CD14-positive monocyte (primary cell): ENCODE measurements at regions of chr15 and their contacts with region 1.

Region 1: DNA sequence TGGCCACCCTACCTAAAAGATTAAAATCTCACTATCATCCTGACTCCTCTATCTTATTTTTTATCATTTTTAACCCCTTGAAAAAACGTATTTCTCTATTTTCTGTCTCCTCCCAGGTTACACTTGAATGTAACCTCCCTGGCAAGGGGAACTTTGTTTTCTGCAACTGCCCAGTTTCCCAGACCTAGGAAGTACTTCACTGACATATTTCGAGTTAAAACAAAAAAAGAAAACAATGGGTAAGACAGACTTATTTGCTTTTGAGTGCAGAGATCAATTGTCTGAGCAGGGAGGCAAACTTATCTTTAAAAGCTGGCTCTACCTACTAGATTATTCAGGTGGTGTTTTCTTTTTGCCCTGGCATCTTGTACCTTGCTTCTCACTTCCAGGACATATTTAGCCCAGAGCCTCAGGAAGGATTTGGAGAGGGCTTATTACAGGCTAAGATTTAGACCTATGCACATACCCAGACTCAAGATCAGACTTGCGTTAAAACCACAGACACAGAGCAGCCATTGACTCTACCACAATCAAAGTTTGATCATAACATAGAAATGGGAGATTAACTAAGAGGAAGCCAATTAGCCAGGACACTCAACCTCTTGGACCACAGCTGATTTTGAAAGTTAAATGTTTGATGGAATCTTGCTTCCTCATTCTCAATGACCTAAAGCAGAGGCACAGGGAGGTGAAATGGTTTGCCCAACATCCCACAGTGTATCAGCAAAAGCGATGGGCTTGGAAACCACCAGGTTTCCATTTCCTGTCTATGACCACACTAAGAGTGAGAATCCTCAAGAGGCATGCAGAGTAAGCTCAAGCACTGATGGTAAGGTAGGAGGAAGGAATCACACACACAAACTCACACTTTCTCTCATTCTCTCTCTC is 169.5 kb upstream of the THBS1 start:
- DNase-seq: peak; percentile 85 to 96 (median 92)
- H3K4me3 ChIP-seq: no peak overlapping the region
- H3K4me3 Mint-ChIP-seq: peak overlapping the region in 1 of 2 donors; percentile 19
- H3K27ac ChIP-seq: peak overlapping the region in 1 of 2 donors; percentile 91
- H3K27ac Mint-ChIP-seq: peak overlapping the region; percentile 73 to 98 (median 93)
- H3K4me1 ChIP-seq: peaks cover 54 to 55% of the 10 kb centered on the region in 2 donors
- H3K4me1 Mint-ChIP-seq: peaks cover 70% of the 10 kb centered on the region
- H3K27me3 ChIP-seq: no peaks in the 10 kb centered on the region
- H3K27me3 Mint-ChIP-seq: peaks cover 0 to 2% (median 0%) of the 10 kb centered on the region in 3 donors
- CTCF ChIP-seq: no peak

Region 2: DNA sequence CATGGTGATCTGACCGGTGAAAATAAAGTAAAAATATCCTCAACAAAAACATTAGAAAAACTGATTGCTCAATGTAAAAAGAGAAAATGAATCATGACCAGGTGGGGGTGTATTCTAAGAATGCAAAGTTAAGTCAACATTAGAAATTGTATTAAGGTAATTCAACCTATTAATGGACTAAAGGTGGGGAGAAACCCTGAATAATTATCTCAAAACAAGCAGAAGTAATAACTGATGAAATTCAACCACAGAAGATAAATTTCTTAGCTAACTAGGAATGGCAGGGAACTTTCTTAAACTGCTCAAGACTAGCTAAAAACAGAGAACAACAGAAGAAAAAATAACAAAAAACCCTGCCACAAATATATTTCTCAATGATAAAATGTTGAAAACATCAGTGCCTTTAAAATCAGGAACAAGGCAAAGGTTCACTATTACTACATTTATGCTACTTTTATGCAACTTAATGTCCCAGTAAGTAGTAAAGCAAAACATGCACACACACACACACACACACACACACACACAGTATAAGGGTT is 34.9 kb before region 1 on chr15:
- intact Hi-C with region 1: loop called in 1 of 2 experiments (anchors 5 kb)
- DNase-seq: peak; percentile 80 to 95 (median 82)
- H3K4me3 ChIP-seq: no peak overlapping the region
- H3K4me3 Mint-ChIP-seq: peak overlapping the region in 1 of 2 donors; percentile 13
- H3K27ac ChIP-seq: peak overlapping the region; percentile 87 to 88
- H3K27ac Mint-ChIP-seq: peak overlapping the region; percentile 89 to 97 (median 93)
- H3K4me1 ChIP-seq: peaks cover 34 to 71% of the 10 kb centered on the region in 2 donors
- H3K4me1 Mint-ChIP-seq: peaks cover 60% of the 10 kb centered on the region
- H3K27me3 ChIP-seq: no peaks in the 10 kb centered on the region
- H3K27me3 Mint-ChIP-seq: peaks cover 0 to 5% (median 2%) of the 10 kb centered on the region in 3 donors
- CTCF ChIP-seq: no peak

Region 3: GRCh38 chr15:39465843-39466749 is 54.8 kb after region 1 on chr15:
- intact Hi-C with region 1: loop called (anchors 5 to 10 kb)
- DNase-seq: no peak
- H3K4me3 ChIP-seq: no peak overlapping the region
- H3K4me3 Mint-ChIP-seq: no peak overlapping the region
- H3K27ac ChIP-seq: no peak overlapping the region
- H3K27ac Mint-ChIP-seq: no peak overlapping the region
- H3K4me1 ChIP-seq: peaks cover 30 to 42% of the 10 kb centered on the region in 2 donors
- H3K4me1 Mint-ChIP-seq: peaks cover 33% of the 10 kb centered on the region
- H3K27me3 ChIP-seq: no peaks in the 10 kb centered on the region
- H3K27me3 Mint-ChIP-seq: no peaks in the 10 kb centered on the region
- CTCF ChIP-seq: no peak

Region 4: GRCh38 chr15:39558421-39558820 is 147.1 kb after region 1 on chr15:
- intact Hi-C with region 1: no loop called
- DNase-seq: no peak
- H3K4me3 ChIP-seq: no peak overlapping the region
- H3K4me3 Mint-ChIP-seq: no peak overlapping the region
- H3K27ac ChIP-seq: no peak overlapping the region
- H3K27ac Mint-ChIP-seq: no peak overlapping the region
- H3K4me1 ChIP-seq: no peaks in the 10 kb centered on the region
- H3K4me1 Mint-ChIP-seq: peaks cover under 1% of the 10 kb centered on the region
- H3K27me3 ChIP-seq: peaks cover 4 to 7% of the 10 kb centered on the region in 2 donors
- H3K27me3 Mint-ChIP-seq: peaks cover 9 to 13% (median 12%) of the 10 kb centered on the region in 3 donors
- CTCF ChIP-seq: no peak